Calu3 (cell line): ENCODE measurements at regions of chr6 and their contacts with region 1.

Region 1: GRCh38 chr6:62891065-62891647 is 320.1 kb upstream of the FKBP1C start:
- DNase-seq: peak; percentile 1
- H3K4me3 Mint-ChIP-seq: no peak overlapping the region
- H3K27ac Mint-ChIP-seq: no peak overlapping the region
- H3K4me1 Mint-ChIP-seq: no peaks in the 10 kb centered on the region
- H3K27me3 Mint-ChIP-seq: no peaks in the 10 kb centered on the region
- CTCF ChIP-seq: no peak

Region 2: GRCh38 chr6:62746968-62747367 is 144.2 kb before region 1 on chr6:
- CTCF ChIA-PET with region 1: no interaction called
- intact Hi-C with region 1: loop called (anchors 5 kb)
- DNase-seq: no peak
- H3K4me3 Mint-ChIP-seq: no peak overlapping the region
- H3K27ac Mint-ChIP-seq: no peak overlapping the region
- H3K4me1 Mint-ChIP-seq: no peaks in the 10 kb centered on the region
- H3K27me3 Mint-ChIP-seq: no peaks in the 10 kb centered on the region
- CTCF ChIP-seq: no peak

Region 3: DNA sequence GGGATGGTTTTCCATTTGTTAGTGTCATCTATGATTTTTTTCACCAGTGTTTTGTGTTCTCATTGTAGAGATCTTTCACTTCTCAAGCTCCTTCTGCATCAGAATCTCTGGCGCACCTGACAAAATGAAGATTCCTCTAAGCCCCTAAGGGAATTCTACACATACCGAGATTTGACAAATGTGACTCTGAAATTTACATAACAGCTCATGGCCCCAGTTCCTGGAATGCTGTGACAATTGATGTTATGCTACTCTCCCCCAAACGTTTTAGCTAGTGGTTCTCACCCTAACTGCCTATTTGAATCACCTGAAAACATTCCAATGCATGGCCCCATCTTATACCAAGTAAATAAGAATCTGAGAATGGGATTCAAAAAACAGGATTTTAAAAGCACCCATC is 158.0 kb after region 1 on chr6:
- CTCF ChIA-PET with region 1: no interaction called
- intact Hi-C with region 1: no loop called
- DNase-seq: no peak
- H3K4me3 Mint-ChIP-seq: no peak overlapping the region
- H3K27ac Mint-ChIP-seq: no peak overlapping the region
- H3K4me1 Mint-ChIP-seq: no peaks in the 10 kb centered on the region
- H3K27me3 Mint-ChIP-seq: no peaks in the 10 kb centered on the region
- CTCF ChIP-seq: no peak

Region 4: DNA sequence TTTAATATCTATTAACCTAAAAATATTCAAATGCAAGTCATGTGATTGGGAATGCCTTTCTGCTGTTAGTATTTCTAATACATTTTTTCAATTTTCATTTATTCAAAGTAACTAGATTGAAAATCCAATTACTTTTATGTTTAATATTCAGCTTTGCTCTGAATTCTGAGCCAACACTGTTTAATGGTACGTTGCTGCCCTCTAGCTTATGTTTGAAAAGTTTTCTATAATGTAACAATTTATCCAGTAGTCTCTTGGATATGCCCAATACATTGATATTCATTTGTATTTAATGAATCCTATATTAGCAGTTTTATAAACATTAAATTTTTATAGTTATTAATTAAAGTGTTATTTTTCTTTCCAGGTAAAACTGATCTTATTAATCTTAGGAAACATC is 381.2 kb after region 1 on chr6:
- CTCF ChIA-PET with region 1: no interaction called
- intact Hi-C with region 1: loop called (anchors 10 kb)
- DNase-seq: peak; percentile 6
- H3K4me3 Mint-ChIP-seq: no peak overlapping the region
- H3K27ac Mint-ChIP-seq: no peak overlapping the region
- H3K4me1 Mint-ChIP-seq: no peaks in the 10 kb centered on the region
- H3K27me3 Mint-ChIP-seq: peaks cover 28% of the 10 kb centered on the region
- CTCF ChIP-seq: no peak